ENCODE measurements at regions of chr3 and their contacts with region 1.

Region 1: DNA sequence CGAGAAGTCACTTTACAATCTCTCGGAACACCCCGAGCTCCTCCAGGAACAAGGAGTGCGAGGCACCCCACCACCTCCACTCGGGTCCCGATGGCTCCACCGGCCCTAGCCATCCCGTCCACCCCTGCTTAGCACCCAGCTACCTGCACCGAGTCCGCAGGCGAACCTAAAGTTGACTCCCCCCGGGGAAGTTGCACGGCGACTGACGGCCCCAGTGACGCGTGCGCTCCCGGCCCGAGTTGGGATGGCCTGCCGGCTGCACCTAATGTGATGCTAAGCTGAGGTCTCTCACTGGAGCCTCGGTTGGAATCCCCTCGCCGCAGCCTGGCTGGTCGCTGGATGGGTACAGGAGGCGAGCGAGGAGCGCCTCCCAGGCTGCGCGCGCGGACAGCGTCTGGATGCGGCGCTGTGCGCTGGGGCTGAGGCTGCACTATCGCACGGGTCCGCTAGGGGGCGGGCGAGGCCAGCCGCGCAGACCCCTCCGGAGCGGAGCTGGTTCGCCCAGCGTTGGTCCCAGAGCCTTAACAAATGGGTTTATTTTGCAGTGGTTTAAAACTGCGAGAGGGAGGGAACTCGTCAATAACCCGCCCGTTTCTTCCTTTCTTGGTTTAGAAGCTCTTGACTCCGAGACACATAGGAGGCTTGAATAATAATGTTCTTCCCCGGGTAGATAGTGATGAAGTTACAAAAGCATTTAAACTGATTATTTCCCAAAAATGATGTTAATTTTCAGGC is at the start of gene OXTR:
- DNase-seq: peak; percentile 69
- H3K4me3 ChIP-seq: peak within 1 kb of the TSS; percentile 66
- H3K27ac ChIP-seq: peak within 1 kb of the TSS; percentile 57
- H3K27me3 ChIP-seq: no peaks in the 10 kb centered on the region
- CTCF ChIP-seq: peak; percentile 98
- polyA plus RNA-seq, gene OXTR: 57.2 and 58.7 TPM in 2 replicates

Region 2: DNA sequence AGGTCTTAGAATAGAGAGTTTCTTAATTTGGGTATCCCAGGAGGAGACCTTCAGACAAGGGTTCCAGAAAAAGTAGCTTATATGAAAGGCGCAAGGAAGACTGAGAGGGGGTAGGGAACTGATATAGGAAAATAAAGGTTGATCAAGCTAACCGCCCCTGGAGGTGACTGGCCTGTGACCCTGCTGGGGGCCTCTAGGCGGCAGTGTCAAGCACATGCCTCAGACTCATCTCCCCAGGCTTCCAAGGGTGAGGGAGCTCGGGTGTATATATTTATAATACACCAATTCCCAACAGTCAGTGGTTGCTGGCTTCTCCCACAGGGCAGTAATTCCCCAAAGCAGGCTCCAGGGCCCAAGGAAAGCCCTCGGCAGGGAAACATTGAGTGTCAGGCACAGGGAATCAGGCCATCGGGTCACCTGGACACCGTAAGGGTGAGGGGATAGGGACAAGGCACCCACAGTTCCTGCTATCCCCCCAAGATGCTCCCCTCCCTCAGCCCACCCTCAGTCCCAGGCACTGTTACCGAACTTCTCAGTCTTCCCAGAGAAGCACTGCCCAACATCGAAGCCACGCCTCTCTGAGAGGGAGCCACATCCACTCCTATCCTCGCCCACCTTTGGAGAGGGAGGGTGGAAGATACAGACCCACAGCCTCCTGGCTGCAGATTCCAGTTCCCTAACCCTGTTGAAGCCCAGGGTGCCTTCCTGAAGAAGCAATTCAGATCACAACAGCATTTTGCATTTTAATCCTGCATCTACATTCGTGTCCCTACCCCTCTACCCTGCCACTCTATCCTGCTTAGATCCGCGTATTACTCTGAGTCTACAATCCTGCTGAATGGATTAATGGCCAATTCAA is 55.1 kb before region 1 on chr3:
- CTCF ChIA-PET with region 1: interaction called, 10 read pairs
- POLR2A ChIA-PET with region 1: no interaction called
- DNase-seq: no peak
- H3K4me3 ChIP-seq: no peak overlapping the region
- H3K27ac ChIP-seq: no peak overlapping the region
- H3K27me3 ChIP-seq: no peaks in the 10 kb centered on the region
- CTCF ChIP-seq: peak; percentile 53

Region 3: GRCh38 chr3:8837162-8837561 is 67.9 kb after region 1 on chr3:
- CTCF ChIA-PET with region 1: interaction called, 18 read pairs
- POLR2A ChIA-PET with region 1: no interaction called
- DNase-seq: no peak
- H3K4me3 ChIP-seq: no peak overlapping the region
- H3K27ac ChIP-seq: no peak overlapping the region
- H3K27me3 ChIP-seq: no peaks in the 10 kb centered on the region
- CTCF ChIP-seq: no peak

Region 4: DNA sequence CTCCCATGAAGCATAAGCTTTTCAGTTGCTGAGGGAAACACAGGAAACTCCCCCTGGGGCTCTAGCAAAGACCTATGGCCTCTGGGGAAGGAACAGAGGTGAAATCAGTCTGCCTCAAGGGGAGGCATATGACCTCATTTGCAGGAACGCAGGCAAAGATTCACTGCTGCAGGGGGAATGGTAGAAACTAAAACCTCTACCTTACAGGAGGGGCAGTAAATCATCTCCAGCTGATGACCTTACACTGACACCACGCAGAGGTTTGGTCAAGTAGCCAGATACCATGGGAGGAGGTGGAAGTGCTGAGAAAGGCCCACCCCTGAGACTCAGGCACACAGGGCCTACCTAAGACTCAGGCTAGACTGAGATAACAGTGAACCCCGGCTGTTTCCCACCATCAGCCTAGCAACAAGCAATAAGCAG is 112.9 kb after region 1 on chr3:
- CTCF ChIA-PET with region 1: interaction called, 28 read pairs
- POLR2A ChIA-PET with region 1: interaction called, 20 read pairs
- DNase-seq: no peak
- H3K4me3 ChIP-seq: no peak overlapping the region
- H3K27ac ChIP-seq: no peak overlapping the region
- H3K27me3 ChIP-seq: no peaks in the 10 kb centered on the region
- CTCF ChIP-seq: no peak

Region 5: DNA sequence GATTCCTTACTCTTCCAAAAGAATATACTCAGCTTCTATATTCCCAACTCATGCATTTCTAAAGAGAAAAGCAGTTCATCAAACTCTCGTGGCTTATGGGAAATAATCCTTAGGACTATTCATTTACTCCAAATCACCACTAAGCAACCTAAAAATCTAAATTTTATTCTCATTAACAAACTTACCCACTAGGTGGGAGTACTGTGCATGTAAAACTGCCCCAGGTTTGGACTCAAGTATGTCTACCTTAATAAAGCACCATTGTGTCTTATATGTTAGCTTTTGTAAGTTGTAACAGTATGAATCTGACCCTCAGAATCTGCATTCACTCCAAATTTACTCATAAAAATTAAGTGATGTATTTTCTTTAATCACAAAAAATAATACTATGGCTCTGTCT is 168.8 kb after region 1 on chr3:
- CTCF ChIA-PET with region 1: interaction called, 78 read pairs
- POLR2A ChIA-PET with region 1: interaction called, 4 read pairs
- DNase-seq: no peak
- H3K4me3 ChIP-seq: no peak overlapping the region
- H3K27ac ChIP-seq: no peak overlapping the region
- H3K27me3 ChIP-seq: no peaks in the 10 kb centered on the region
- CTCF ChIP-seq: peak; percentile 48

Region 6: DNA sequence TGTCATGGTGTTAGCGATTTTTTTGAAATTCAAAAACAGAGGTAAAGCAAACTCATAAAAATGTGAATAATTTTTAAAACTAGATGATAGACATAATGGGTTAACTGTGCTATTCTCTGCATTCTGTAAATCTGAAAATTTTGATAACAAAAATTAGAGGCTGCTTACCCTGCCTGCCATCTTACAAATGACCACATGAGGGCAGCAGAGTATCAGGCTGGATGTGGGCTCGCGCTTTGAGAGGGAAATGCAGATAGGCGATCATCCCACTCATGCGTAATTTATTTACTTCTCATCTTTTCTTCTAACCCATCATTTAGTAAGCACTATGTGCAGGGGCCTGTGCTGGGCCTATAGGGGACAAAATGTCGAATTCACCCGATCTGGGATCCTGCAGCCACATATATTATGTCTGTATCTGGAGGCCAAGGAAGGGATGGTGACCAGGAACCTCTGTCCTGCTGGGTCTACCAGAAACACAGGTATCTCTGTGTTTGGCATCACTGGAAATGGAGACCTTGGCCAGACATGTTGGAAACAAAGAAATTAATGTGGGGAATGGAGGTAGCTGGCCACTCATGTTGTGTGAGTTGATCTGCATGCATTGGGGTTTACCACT is 201.8 kb after region 1 on chr3:
- CTCF ChIA-PET with region 1: interaction called, 59 read pairs
- POLR2A ChIA-PET with region 1: no interaction called
- DNase-seq: peak; percentile 37
- H3K4me3 ChIP-seq: no peak overlapping the region
- H3K27ac ChIP-seq: no peak overlapping the region
- H3K27me3 ChIP-seq: no peaks in the 10 kb centered on the region
- CTCF ChIP-seq: peak; percentile 99

Region 7: DNA sequence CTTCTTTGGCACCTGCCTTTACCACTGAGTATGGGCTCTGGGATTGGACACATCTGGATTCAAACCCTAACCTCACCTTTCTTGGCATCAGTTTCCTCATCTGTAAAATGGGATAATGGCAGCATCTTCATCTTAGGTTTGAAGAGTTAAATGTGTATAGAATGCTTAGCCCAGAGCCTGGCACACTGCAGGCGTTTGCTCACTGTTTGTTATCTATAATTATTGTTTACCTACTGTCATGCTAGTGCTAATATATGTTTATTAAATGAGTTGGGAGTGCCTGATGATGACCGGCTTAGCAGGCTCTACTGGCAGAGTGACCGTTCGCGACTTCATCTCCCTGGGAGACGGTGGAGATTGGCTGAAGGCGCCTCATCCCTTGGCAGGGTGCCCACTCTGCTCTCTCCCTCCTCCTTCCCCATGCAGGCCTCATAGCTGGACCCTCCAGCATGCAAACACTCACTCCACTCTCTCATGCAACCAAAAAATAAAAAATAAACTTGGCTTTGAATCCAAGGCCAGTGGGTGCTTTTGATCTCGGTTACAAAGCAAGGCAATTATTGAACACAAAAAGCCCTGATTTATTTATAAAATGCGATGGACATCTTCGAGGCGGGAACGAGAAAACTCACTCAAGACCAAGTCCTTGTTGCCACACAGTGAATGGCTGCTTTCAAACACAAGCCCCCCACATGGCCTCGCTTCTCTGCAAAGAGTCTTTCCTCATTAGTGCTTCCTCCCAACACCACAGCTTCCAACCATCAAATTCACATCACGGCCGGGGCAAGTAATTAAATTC is 329.5 kb after region 1 on chr3:
- CTCF ChIA-PET with region 1: no interaction called
- POLR2A ChIA-PET with region 1: no interaction called
- DNase-seq: no peak
- H3K4me3 ChIP-seq: no peak overlapping the region
- H3K27ac ChIP-seq: no peak overlapping the region
- H3K27me3 ChIP-seq: peaks cover 15% of the 10 kb centered on the region
- CTCF ChIP-seq: no peak